Endothelial cell of umbilical vein (primary cell): ENCODE measurements at regions of chr4 and their contacts with region 1.

Region 1: DNA sequence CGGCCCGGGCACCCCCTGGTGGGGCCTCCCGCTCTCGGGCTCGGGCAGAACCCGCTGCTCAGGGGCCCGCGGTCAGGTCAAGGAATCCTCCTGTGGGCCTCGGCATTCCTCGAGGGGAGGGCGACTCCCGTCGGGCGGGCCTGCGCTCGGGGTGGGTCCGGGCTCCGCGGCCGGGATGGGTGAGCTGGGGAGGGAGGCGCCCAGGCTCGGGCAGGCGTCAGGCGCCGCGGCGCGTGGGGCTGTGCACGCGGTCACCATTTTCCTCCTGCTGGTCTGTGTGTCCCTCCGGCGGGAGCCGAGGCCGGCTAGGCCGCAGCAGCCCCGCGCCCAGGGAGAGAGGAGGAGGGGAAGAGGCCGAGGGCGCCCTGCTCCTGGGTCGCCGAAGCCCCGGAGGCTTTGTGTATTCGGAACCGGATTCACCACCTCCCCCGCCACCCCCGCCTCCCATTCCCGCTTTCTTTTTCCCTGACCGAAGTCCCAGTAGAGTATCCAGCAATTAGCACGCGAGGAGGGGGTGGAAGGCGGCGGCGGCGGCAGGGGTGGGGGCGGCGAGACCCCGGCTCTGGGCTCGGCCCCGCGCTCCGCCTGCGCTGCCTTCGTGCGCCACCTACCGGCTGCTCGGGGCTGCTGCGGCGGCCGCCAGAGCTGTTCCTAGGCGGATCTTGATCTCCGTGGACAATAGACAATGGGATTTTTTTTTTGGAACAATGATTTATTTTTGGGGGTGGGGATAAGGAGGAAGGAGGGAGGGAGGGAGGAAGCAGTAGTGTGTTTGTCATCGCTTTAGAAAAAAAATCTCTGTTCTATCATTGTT is 99.0 kb upstream of the MAML3 start:
- DNase-seq: peak; percentile 93
- H3K4me3 ChIP-seq: peak overlapping the region in 1 of 3 experiments; percentile 37
- H3K27ac ChIP-seq: peak overlapping the region; percentile 78
- H3K4me1 ChIP-seq: peaks cover 60% of the 10 kb centered on the region
- H3K27me3 ChIP-seq: no peaks in the 10 kb centered on the region
- CTCF ChIP-seq: peak; percentile 83 to 91
- POLR2A ChIP-seq: no peak

Region 2: GRCh38 chr4:139656614-139657486 is 596.1 kb before region 1 on chr4:
- CTCF ChIA-PET with region 1: interaction called, 8 read pairs
- POLR2A ChIA-PET with region 1: no interaction called
- dilution Hi-C with region 1: no loop called
- intact Hi-C with region 1: loop called (anchors 1 kb)
- DNase-seq: peak; percentile 76
- H3K4me3 ChIP-seq: peak overlapping the region in 1 of 3 experiments; percentile 30
- H3K27ac ChIP-seq: peak overlapping the region; percentile 94
- H3K4me1 ChIP-seq: peaks cover 45% of the 10 kb centered on the region
- H3K27me3 ChIP-seq: no peaks in the 10 kb centered on the region
- CTCF ChIP-seq: peak; percentile 83 to 86
- POLR2A ChIP-seq: no peak

Region 3: DNA sequence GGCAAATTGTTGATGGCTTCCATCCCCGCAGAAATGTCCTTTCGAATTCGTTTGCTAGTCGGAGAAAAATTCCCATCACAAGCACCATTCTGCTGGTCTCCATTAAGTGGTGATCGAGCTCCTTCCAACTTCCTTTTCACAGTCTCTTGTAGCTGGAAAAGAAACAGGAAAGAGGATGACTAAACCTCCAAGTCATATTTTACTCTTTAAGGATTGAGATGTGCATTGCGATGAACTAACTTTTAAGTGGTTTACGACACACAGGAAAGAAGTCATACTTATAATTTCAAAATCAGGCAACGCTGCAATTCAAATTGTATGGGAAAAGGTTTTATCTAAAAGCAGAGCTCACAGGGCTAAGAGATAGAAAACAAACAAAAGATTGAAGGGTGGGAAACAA is 362.1 kb before region 1 on chr4:
- CTCF ChIA-PET with region 1: interaction called, 8 read pairs
- POLR2A ChIA-PET with region 1: no interaction called
- dilution Hi-C with region 1: no loop called
- intact Hi-C with region 1: loop called (anchors 1 kb)
- DNase-seq: peak; percentile 81
- H3K4me3 ChIP-seq: no peak overlapping the region
- H3K27ac ChIP-seq: peak overlapping the region; percentile 51
- H3K4me1 ChIP-seq: peaks cover 24% of the 10 kb centered on the region
- H3K27me3 ChIP-seq: no peaks in the 10 kb centered on the region
- CTCF ChIP-seq: peak; percentile 21 to 22
- POLR2A ChIP-seq: no peak

Region 4: GRCh38 chr4:140049024-140049848 is 203.7 kb before region 1 on chr4:
- CTCF ChIA-PET with region 1: interaction called, 27 read pairs
- POLR2A ChIA-PET with region 1: no interaction called
- dilution Hi-C with region 1: no loop called
- intact Hi-C with region 1: loop called (anchors 1 kb)
- DNase-seq: peak; percentile 85
- H3K4me3 ChIP-seq: peak overlapping the region; percentile 0 to 24 (median 5)
- H3K27ac ChIP-seq: peak overlapping the region; percentile 80
- H3K4me1 ChIP-seq: peaks cover 49% of the 10 kb centered on the region
- H3K27me3 ChIP-seq: no peaks in the 10 kb centered on the region
- CTCF ChIP-seq: no peak
- POLR2A ChIP-seq: no peak

Region 5: DNA sequence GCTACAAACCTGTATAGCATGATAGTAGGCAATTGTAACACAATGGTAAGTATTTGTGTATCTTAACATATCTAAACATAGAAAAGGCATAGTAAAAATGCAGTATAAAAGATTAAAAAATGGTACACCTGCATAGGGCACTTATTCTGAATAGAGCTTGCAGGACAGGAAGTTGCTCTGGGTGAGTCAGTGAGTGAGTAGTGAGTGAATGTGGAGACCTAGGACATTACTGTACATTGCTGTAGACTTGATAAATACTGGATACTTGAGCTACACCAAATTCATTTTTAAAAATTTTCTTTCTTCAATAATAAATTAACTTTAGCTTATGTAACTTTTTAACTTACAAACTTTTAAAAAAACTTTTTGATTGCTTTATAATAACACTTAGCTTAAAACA is 30.8 kb before region 1 on chr4:
- CTCF ChIA-PET with region 1: no interaction called
- POLR2A ChIA-PET with region 1: no interaction called
- dilution Hi-C with region 1: no loop called
- intact Hi-C with region 1: loop called (anchors 2 kb)
- DNase-seq: peak; percentile 66
- H3K4me3 ChIP-seq: no peak overlapping the region
- H3K27ac ChIP-seq: peak overlapping the region; percentile 65
- H3K4me1 ChIP-seq: peaks cover 19% of the 10 kb centered on the region
- H3K27me3 ChIP-seq: no peaks in the 10 kb centered on the region
- CTCF ChIP-seq: no peak
- POLR2A ChIP-seq: no peak

Region 6: GRCh38 chr4:140326395-140326993 is 73.5 kb after region 1 on chr4:
- CTCF ChIA-PET with region 1: interaction called, 26 read pairs
- POLR2A ChIA-PET with region 1: no interaction called
- dilution Hi-C with region 1: no loop called
- intact Hi-C with region 1: loop called (anchors 1 kb)
- DNase-seq: peak; percentile 68
- H3K4me3 ChIP-seq: no peak overlapping the region
- H3K27ac ChIP-seq: no peak overlapping the region
- H3K4me1 ChIP-seq: no peaks in the 10 kb centered on the region
- H3K27me3 ChIP-seq: peaks cover 4 to 6% of the 10 kb centered on the region in 2 experiments
- CTCF ChIP-seq: peak; percentile 69
- POLR2A ChIP-seq: no peak